ENCODE measurements at regions of chr18 and their contacts with region 1.

Region 1: GRCh38 chr18:32092422-32093101 is 888 bp downstream of the RNF138 start:
- DNase-seq: peak; percentile 94 to 95
- H3K4me3 ChIP-seq: peak overlapping the region; percentile 76
- H3K4me3 Mint-ChIP-seq: peak overlapping the region; percentile 92
- H3K27ac Mint-ChIP-seq: peak overlapping the region; percentile 94
- H3K4me1 ChIP-seq: no peaks in the 10 kb centered on the region
- H3K4me1 Mint-ChIP-seq: peaks cover 10% of the 10 kb centered on the region
- H3K27me3 ChIP-seq: no peaks in the 10 kb centered on the region
- H3K27me3 Mint-ChIP-seq: no peaks in the 10 kb centered on the region
- CTCF ChIP-seq: no peak

Region 2: GRCh38 chr18:31587529-31587928 is 505.0 kb before region 1 on chr18:
- CTCF ChIA-PET with region 1: no interaction called
- POLR2A ChIA-PET with region 1: no interaction called
- intact Hi-C with region 1: loop called (anchors 5 kb)
- DNase-seq: peak; percentile 66 to 73
- H3K4me3 ChIP-seq: no peak overlapping the region
- H3K4me3 Mint-ChIP-seq: peak overlapping the region; percentile 49
- H3K27ac Mint-ChIP-seq: peak overlapping the region; percentile 79
- H3K4me1 ChIP-seq: peaks cover 51% of the 10 kb centered on the region
- H3K4me1 Mint-ChIP-seq: peaks cover 27% of the 10 kb centered on the region
- H3K27me3 ChIP-seq: no peaks in the 10 kb centered on the region
- H3K27me3 Mint-ChIP-seq: no peaks in the 10 kb centered on the region
- CTCF ChIP-seq: no peak

Region 3: GRCh38 chr18:31942999-31943865 is 149.3 kb before region 1 on chr18 and contains the start of gene TRAPPC8:
- CTCF ChIA-PET with region 1: no interaction called
- POLR2A ChIA-PET with region 1: interaction called, 6 read pairs
- intact Hi-C with region 1: loop called (anchors 1 kb)
- DNase-seq: peak; percentile 91 to 96
- H3K4me3 ChIP-seq: peak within 1 kb of the TSS; percentile 79
- H3K4me3 Mint-ChIP-seq: peak within 1 kb of the TSS; percentile 89
- H3K27ac Mint-ChIP-seq: peak within 1 kb of the TSS; percentile 99
- H3K4me1 ChIP-seq: no peaks in the 10 kb centered on the region
- H3K4me1 Mint-ChIP-seq: peaks cover 6% of the 10 kb centered on the region
- H3K27me3 ChIP-seq: no peaks in the 10 kb centered on the region
- H3K27me3 Mint-ChIP-seq: no peaks in the 10 kb centered on the region
- CTCF ChIP-seq: no peak
- total RNA-seq, gene TRAPPC8: 19.8 and 21.1 TPM in 2 replicates

Region 4: GRCh38 chr18:31996007-31996406 is 96.6 kb before region 1 on chr18:
- CTCF ChIA-PET with region 1: no interaction called
- POLR2A ChIA-PET with region 1: no interaction called
- intact Hi-C with region 1: no loop called
- DNase-seq: no peak
- H3K4me3 ChIP-seq: no peak overlapping the region
- H3K4me3 Mint-ChIP-seq: no peak overlapping the region
- H3K27ac Mint-ChIP-seq: no peak overlapping the region
- H3K4me1 ChIP-seq: no peaks in the 10 kb centered on the region
- H3K4me1 Mint-ChIP-seq: no peaks in the 10 kb centered on the region
- H3K27me3 ChIP-seq: no peaks in the 10 kb centered on the region
- H3K27me3 Mint-ChIP-seq: no peaks in the 10 kb centered on the region
- CTCF ChIP-seq: no peak

Region 5: GRCh38 chr18:32018331-32019250 is 74.0 kb before region 1 on chr18 and contains the start of gene RNF125:
- CTCF ChIA-PET with region 1: interaction called, 3 read pairs
- POLR2A ChIA-PET with region 1: interaction called, 3 read pairs
- intact Hi-C with region 1: loop called (anchors 10 kb)
- DNase-seq: peak; percentile 52 to 67
- H3K4me3 ChIP-seq: peak within 1 kb of the TSS; percentile 49
- H3K4me3 Mint-ChIP-seq: peak within 1 kb of the TSS; percentile 88
- H3K27ac Mint-ChIP-seq: no peak within 1 kb of the TSS
- H3K4me1 ChIP-seq: no peaks in the 10 kb centered on the region
- H3K4me1 Mint-ChIP-seq: peaks cover 6% of the 10 kb centered on the region
- H3K27me3 ChIP-seq: no peaks in the 10 kb centered on the region
- H3K27me3 Mint-ChIP-seq: peaks cover 2% of the 10 kb centered on the region
- CTCF ChIP-seq: no peak
- total RNA-seq, gene RNF125: 0.39 and 0.61 TPM in 2 replicates

Region 6: GRCh38 chr18:32189790-32190189 is 97.2 kb after region 1 on chr18 and contains the start of gene MEP1B:
- CTCF ChIA-PET with region 1: no interaction called
- POLR2A ChIA-PET with region 1: no interaction called
- intact Hi-C with region 1: no loop called
- DNase-seq: no peak
- H3K4me3 ChIP-seq: no peak within 1 kb of the TSS
- H3K4me3 Mint-ChIP-seq: no peak within 1 kb of the TSS
- H3K27ac Mint-ChIP-seq: no peak within 1 kb of the TSS
- H3K4me1 ChIP-seq: no peaks in the 10 kb centered on the region
- H3K4me1 Mint-ChIP-seq: no peaks in the 10 kb centered on the region
- H3K27me3 ChIP-seq: no peaks in the 10 kb centered on the region
- H3K27me3 Mint-ChIP-seq: no peaks in the 10 kb centered on the region
- CTCF ChIP-seq: no peak
- total RNA-seq, gene MEP1B: not detected in 2 replicates

Measured in Caco-2 (cell line).